ENCODE measurements at regions of chr2 and their contacts with region 1.

Region 1: DNA sequence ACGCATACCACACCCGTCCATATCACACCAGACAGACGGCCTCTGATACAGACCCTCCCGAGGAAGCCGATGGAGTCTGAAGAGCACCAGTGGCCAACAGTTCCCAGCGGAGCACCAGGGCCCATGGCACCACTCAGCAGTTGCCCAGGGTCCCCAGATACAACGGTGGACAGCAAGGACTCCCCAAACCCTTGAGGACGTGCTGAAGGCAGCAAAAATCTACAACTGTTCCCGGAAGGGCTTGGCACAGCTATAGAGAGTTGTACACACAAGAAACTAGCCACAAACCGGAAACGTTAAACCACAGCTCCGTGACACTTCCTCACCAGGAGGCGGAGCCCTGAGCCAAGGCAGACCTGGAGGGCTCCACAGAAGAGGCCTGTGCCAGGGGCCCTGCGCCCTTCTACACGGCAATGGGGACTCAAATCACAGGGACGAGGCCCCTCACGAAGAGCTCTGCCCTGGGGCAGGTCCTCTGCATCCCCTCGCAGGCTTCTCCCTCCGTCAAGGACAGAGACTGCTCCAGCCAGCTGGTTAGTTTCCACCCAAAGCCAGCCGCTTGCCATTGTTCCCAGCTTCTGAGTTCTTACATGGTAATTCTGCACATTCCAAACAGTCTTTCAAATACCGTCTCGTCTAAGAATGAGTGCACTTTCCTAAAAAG is 133.4 kb downstream of the HDAC4 start:
- DNase-seq: peak; percentile 91
- H3K4me3 Mint-ChIP-seq: peak overlapping the region; percentile 82
- H3K27ac Mint-ChIP-seq: peak overlapping the region; percentile 82
- H3K4me1 Mint-ChIP-seq: peaks cover 73% of the 10 kb centered on the region
- H3K27me3 Mint-ChIP-seq: peaks cover 5% of the 10 kb centered on the region

Region 2: GRCh38 chr2:239146011-239146641 is 121.3 kb before region 1 on chr2:
- intact Hi-C with region 1: loop called (anchors 2 kb)
- DNase-seq: no peak
- H3K4me3 Mint-ChIP-seq: no peak overlapping the region
- H3K27ac Mint-ChIP-seq: no peak overlapping the region
- H3K4me1 Mint-ChIP-seq: peaks cover 16% of the 10 kb centered on the region
- H3K27me3 Mint-ChIP-seq: no peaks in the 10 kb centered on the region

Region 3: DNA sequence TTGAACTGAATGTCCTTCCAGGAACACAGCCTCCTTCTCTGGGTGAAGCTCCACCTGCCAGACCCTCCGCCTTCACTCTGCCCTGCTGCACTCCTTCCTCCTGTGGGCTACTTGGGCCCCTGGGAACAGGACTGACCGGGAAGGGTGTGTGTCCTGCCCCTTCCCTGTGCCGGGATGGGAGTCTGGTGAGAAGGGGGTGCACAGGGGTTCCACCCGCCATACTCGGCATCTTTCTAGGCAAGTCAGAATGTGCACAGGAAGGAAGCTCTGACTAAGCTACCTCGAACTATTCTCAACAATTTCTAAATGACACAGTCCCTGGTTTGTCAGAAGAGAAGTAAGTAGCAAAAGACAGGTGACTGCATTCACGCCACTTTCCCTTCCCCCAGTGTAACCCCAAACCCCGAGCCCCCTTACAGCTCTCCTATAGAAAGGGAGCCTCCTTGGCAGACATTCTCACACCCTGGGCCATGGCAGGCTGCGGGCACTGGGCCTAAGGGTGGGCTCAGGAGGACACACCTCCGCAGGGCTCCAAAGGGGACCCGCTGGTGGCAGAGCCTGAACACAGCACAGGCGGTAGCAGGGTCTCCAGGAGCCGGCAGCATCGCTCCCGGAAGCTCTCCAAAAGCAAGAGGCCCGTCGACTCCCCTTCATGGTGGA is 50.7 kb before region 1 on chr2:
- intact Hi-C with region 1: loop called (anchors 1 kb)
- DNase-seq: peak; percentile 32
- H3K4me3 Mint-ChIP-seq: peak overlapping the region; percentile 65
- H3K27ac Mint-ChIP-seq: peak overlapping the region; percentile 88
- H3K4me1 Mint-ChIP-seq: peaks cover 53% of the 10 kb centered on the region
- H3K27me3 Mint-ChIP-seq: no peaks in the 10 kb centered on the region

Region 4: GRCh38 chr2:239298116-239298804 is 30.8 kb after region 1 on chr2:
- intact Hi-C with region 1: loop called (anchors 1 kb)
- DNase-seq: peak; percentile 76
- H3K4me3 Mint-ChIP-seq: peak overlapping the region; percentile 81
- H3K27ac Mint-ChIP-seq: peak overlapping the region; percentile 81
- H3K4me1 Mint-ChIP-seq: peaks cover 65% of the 10 kb centered on the region
- H3K27me3 Mint-ChIP-seq: no peaks in the 10 kb centered on the region

Region 5: GRCh38 chr2:239401067-239401880 is 133.9 kb after region 1 on chr2:
- intact Hi-C with region 1: loop called (anchors 2 kb)
- DNase-seq: peak; percentile 98
- H3K4me3 Mint-ChIP-seq: peak overlapping the region; percentile 91
- H3K27ac Mint-ChIP-seq: peak overlapping the region; percentile 99
- H3K4me1 Mint-ChIP-seq: peaks cover 33% of the 10 kb centered on the region
- H3K27me3 Mint-ChIP-seq: peaks cover 9% of the 10 kb centered on the region

Measured in activated T-helper 2 cell treated with anti-CD3 and anti-CD28 coated beads, Interferon-gamma antibody, Interleukin-2, Interleukin-4, amounts not matched to agents 10 μg/mL and 5 μg/mL and 100 μg/mL, durations not matched to agents 14 hours and 24 hours and 36 hours (primary cell).